MCF 10A (cell line): ENCODE measurements at regions of chr14 and their contacts with region 1.

Region 1: DNA sequence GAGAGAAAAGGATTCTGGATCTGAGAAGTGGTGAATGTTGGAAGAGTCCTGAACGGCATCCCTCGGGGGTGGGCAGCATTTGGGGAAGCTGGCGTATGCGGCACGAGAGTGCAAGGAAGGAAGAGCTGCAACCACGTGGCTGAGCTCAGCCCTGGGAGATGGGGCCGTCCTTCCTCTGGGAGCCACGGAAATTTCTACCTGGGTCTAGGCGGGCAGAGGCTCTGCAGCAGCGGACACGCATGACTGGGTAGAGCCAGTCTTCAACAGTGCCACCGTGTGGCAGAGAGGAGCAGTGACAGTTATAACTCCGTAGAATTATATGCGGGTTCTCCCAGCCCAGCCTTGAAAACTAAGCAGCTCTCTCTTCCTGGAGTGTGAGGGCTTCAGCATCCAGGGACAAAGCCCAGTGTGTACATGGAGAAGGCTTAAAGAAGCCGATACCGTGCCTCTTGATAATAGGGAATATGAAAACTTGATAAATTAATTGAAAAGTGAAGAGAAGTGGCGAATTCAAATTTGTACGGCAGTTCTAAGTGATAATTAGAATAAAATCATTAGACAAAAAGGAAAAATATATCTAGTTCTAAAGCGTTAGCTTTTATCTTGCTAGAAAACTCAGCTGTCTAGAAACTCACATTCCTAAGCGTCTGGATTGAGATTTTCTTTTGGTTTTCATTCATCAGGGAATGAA is 82.9 kb upstream of the STXBP6 start:
- DNase-seq: peak; percentile 1
- H3K4me3 Mint-ChIP-seq: peak overlapping the region; percentile 42
- H3K27ac Mint-ChIP-seq: no peak overlapping the region
- H3K4me1 Mint-ChIP-seq: no peaks in the 10 kb centered on the region
- H3K27me3 Mint-ChIP-seq: peaks cover 33% of the 10 kb centered on the region
- CTCF ChIP-seq: peak; percentile 60

Region 2: DNA sequence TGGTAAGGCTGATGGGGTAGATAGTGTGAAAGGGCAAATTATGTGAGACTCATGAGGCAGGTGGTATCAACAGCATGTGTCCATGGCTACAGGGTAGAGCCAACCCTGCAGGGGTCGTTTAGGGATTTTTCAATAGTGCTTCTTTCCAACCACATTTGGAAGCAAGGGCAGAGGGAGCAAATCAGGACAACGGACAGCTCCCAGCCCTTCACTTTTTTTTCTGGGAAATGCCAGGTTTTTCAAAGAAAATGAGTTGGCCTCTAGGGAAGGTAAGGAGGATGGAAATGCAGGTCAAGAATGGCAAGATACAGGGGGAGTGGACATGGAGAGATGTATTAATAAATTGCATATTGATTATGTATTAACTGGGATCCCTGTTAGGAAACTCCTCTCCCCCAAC is 619.9 kb before region 1 on chr14:
- CTCF ChIA-PET with region 1: no interaction called
- POLR2A ChIA-PET with region 1: no interaction called
- intact Hi-C with region 1: no loop called
- DNase-seq: no peak
- H3K4me3 Mint-ChIP-seq: no peak overlapping the region
- H3K27ac Mint-ChIP-seq: no peak overlapping the region
- H3K4me1 Mint-ChIP-seq: no peaks in the 10 kb centered on the region
- H3K27me3 Mint-ChIP-seq: peaks cover 29% of the 10 kb centered on the region
- CTCF ChIP-seq: no peak

Region 3: GRCh38 chr14:24734878-24735500 is 397.9 kb before region 1 on chr14:
- CTCF ChIA-PET with region 1: interaction called, 3 read pairs
- POLR2A ChIA-PET with region 1: no interaction called
- intact Hi-C with region 1: loop called (anchors 1 kb)
- DNase-seq: peak; percentile 17
- H3K4me3 Mint-ChIP-seq: no peak overlapping the region
- H3K27ac Mint-ChIP-seq: no peak overlapping the region
- H3K4me1 Mint-ChIP-seq: no peaks in the 10 kb centered on the region
- H3K27me3 Mint-ChIP-seq: no peaks in the 10 kb centered on the region
- CTCF ChIP-seq: peak; percentile 55

Region 4: DNA sequence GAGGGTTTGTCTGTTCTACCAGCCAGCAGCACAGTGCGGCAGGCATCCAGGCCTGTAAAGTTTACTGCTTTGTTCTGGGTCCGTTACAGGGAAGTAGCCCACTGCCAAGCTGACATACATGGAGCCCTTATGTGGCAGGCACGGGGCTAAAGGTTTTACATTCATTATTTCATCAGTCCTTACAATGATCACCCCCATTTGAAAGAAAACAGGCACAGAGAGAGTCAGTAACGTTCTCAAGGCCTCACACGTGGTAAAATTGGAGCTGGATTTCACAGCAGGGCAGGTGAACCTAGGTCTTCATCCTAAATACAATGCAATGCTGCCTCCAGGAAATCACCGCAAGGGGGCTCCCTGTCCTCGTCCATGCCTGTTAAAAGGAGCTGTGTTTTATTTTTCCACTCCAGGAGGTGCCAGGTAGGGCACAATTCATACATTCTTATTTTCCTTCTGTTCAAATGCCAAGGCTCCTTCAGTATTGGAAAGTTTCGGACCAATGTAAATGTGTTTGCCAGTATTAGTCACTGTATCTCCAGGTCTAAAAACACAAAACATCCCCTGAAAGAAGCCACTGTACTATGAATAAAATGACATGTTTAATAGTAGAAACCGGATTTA is 326.7 kb before region 1 on chr14:
- CTCF ChIA-PET with region 1: interaction called, 16 read pairs
- POLR2A ChIA-PET with region 1: no interaction called
- intact Hi-C with region 1: loop called (anchors 1 kb)
- DNase-seq: no peak
- H3K4me3 Mint-ChIP-seq: no peak overlapping the region
- H3K27ac Mint-ChIP-seq: no peak overlapping the region
- H3K4me1 Mint-ChIP-seq: no peaks in the 10 kb centered on the region
- H3K27me3 Mint-ChIP-seq: no peaks in the 10 kb centered on the region
- CTCF ChIP-seq: peak; percentile 69

Region 5: GRCh38 chr14:25074099-25074685 is 58.7 kb before region 1 on chr14:
- CTCF ChIA-PET with region 1: no interaction called
- POLR2A ChIA-PET with region 1: no interaction called
- intact Hi-C with region 1: no loop called
- DNase-seq: no peak
- H3K4me3 Mint-ChIP-seq: no peak overlapping the region
- H3K27ac Mint-ChIP-seq: no peak overlapping the region
- H3K4me1 Mint-ChIP-seq: no peaks in the 10 kb centered on the region
- H3K27me3 Mint-ChIP-seq: no peaks in the 10 kb centered on the region
- CTCF ChIP-seq: no peak